ENCODE measurements at regions of chrX and their contacts with region 1.

Region 1: DNA sequence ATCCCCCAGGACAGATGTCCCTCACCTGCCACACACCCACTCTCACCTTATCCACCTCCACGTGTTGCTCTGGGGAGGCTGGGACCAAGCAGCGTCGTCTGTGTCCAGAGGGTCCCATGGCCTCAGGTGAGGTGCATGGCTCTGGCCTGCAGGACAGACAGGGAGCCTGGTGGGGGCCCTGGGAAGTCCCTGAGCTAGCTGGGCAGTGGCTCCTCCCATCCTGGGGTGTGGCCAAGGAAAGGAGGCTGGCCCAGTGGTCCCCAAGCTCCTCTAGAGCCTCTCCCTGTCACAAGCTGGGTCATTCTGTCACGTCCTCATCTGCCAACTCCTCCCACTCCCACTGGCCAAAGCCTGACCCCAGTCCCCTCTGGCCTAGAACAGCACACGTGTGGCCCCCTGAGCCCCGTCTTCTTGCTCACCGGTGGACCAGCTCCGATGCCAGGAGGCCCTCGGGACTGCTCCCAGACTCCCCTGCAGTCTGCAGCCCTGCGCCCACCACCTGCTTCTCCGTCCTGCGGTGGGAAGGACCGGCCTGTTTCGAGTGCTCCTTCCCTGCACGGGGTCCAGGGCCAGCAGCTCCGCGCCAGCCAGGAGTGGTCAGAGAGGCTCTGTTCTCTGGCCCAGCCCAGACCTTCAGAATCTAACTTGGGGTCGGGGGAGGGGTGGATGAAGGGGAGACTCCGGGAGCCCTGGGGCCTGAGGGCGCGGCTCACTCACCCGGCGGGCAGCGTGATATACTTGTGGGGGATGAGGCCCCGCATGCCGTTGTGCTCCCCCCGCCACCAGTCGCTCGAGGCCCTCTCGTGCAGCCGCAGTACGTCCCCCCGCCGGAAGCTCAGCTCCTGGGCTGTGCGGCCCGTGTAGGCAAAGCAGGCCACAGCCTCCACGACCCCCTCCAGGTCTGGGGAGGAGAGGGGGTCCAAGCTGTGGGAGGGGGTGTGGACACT is 4.8 kb downstream of the AVPR2 start:
- DNase-seq: no peak
- H3K4me3 Mint-ChIP-seq: no peak overlapping the region
- H3K27ac Mint-ChIP-seq: no peak overlapping the region
- H3K4me1 Mint-ChIP-seq: peaks cover 9% of the 10 kb centered on the region
- H3K27me3 Mint-ChIP-seq: no peaks in the 10 kb centered on the region

Region 2: DNA sequence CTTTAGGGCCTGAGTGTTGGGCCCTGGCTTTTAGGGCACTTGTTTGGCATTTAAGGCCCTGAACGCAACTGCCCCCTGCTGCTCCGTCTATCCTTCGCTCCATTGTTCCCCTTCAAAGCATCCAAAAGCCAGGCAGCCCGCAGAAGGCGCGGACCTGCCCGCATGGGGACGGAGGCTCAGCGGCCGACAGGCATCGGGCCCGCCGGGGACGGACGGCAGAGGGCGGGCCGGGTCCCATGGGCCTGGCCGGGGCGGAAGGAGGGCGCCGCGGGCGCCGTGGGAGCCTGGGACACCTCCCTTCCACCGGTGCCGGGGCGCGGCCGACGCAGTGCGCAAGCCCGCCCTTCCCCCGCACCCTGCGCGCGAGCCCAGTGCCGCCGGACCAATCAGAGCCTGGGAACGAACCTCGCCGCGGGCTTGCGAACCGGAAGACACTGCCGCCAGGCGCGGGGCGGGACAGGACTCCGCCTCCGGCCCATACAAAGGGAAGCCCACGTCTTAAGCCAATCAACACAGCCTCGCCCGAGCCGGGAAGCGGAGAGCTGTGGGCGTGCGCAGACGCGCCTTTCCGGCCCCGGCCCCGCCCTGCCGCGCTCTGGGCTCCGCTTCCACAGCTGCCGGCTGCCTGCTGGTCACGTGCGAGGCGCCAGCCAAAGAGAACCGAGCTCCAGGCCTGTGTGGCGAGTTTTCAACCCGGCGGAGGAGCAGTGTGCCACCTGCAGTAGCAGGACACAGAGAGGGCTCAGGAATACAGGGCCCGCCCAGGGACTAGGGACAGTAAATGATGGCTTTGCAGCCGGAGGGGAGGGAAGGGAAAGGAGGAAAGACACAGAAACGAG is 18.8 kb after region 1 on chrX:
- CTCF ChIA-PET with region 1: interaction called, 44 read pairs
- POLR2A ChIA-PET with region 1: no interaction called
- DNase-seq: peak; percentile 93
- H3K4me3 Mint-ChIP-seq: peak overlapping the region; percentile 90
- H3K27ac Mint-ChIP-seq: peak overlapping the region; percentile 98
- H3K4me1 Mint-ChIP-seq: peaks cover 27% of the 10 kb centered on the region
- H3K27me3 Mint-ChIP-seq: no peaks in the 10 kb centered on the region

Measured in activated CD4-positive, alpha-beta T cell treated with anti-CD3 and anti-CD28 coated beads, Interleukin-2, amount 10 ng/mL, durations not matched to agents 7 days and 5 days (primary cell).